ENCODE measurements at regions of chr17 and their contacts with region 1.

Region 1: DNA sequence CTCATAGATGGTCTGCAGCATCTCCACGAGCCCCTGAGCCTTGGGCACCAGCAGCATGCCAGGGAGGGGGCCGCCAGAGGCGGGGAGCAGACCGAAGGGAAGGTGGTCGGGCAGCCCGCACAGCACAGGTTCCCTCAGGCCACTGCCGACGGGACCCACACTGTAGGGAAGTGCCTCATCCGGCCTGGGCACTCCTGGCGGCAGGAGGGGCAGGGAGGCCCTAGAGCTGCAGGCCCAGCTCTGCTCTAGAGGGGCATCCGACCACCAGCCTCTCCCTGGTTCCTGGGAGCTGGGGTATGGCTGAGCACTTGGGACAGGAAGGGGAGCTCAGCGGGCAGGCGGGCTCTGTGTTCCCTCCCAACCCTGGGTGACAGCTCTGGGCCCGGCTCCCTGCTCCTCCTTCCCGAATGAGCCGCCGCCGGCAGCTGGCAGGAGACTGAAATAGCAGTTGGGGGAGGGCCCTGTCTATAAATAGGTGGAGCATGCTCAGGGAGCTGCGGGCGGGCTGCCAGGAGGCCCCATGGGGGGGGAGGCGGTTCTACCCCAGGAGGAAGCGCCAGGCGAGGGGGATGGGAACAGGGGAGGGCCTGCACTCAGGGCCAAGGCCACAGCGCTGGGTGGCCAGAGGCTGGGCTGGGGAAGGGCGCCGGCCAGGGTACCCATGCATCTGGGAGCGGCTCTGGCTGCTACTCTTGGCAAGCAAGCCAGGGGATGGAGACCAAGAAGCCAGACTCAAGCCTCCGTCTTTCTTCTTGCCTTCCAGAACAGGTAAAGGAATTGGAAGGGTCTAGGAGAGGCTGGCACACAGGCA is 12.4 kb downstream of the HDAC5 start:
- DNase-seq: no peak
- H3K4me3 ChIP-seq: peak overlapping the region; percentile 57
- H3K27ac ChIP-seq: peak overlapping the region; percentile 47
- H3K27me3 ChIP-seq: no peaks in the 10 kb centered on the region
- CTCF ChIP-seq: no peak; the same call in 1 of the 2 replicates

Region 2: GRCh38 chr17:43006639-43007551 is 1104.1 kb before region 1 on chr17 and contains the start of gene IFI35:
- CTCF ChIA-PET with region 1: no interaction called
- POLR2A ChIA-PET with region 1: no interaction called
- DNase-seq: peak; percentile 52
- H3K4me3 ChIP-seq: peak within 1 kb of the TSS; percentile 89
- H3K27ac ChIP-seq: peak within 1 kb of the TSS; percentile 94
- H3K27me3 ChIP-seq: no peaks in the 10 kb centered on the region
- CTCF ChIP-seq: peak; percentile 31
- polyA plus RNA-seq, gene IFI35: 24.1 and 25.7 TPM in 2 replicates

Region 3: DNA sequence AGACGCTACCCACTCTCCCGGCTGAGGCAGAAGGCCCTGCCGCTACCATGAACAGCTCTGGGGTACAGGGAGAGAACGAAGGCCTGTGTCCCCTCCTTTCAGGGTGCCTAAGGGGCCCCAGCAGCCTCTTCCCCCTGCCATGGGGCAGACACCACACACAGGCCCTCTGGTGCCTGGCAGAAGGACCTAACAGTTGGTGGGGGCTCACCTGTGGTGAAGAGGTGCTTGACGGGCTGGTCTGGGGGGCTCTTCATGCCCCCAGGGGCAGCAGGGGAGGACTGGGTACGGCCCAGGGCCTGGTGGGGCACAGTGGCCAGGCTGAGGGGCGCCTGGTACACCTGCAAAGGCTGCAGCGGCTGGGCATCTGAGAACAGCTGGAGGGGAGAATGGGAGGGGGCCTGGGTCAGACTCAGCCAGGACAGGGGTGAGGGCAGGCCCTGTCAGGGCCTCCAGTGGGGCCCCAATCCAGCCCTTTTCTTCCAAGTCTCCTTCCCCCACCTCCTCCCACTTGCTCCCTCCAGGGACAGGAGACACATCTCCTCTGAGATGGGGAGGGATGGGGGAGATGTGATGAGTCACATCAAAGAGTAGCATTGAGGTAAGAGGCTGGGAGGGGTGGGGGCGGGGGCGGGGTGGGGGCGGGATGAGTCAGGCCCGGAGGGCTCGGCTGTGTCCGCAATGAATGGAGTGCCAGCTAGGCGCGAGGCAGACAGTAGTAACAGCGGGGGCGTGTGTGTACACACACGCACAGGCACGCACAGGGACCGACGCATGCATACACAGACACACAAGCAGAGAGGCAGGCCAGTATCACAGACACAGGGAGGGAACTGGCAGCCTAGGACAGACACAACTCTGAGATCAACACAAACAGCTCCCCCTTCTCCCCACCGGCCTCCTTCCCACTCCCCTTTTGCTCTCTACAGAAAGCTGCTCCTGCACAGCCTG is 24.4 kb before region 1 on chr17:
- CTCF ChIA-PET with region 1: interaction called, 10 read pairs
- POLR2A ChIA-PET with region 1: interaction called, 14 read pairs
- DNase-seq: peak; percentile 75
- H3K4me3 ChIP-seq: no peak overlapping the region; the same call in 1 of the 2 replicates
- H3K27ac ChIP-seq: peak overlapping the region; percentile 81
- H3K27me3 ChIP-seq: no peaks in the 10 kb centered on the region
- CTCF ChIP-seq: no peak

Region 4: GRCh38 chr17:44095642-44096496 is 15.2 kb before region 1 on chr17:
- CTCF ChIA-PET with region 1: interaction called, 14 read pairs
- POLR2A ChIA-PET with region 1: interaction called, 12 read pairs
- DNase-seq: peak; percentile 79
- H3K4me3 ChIP-seq: peak overlapping the region; percentile 54
- H3K27ac ChIP-seq: peak overlapping the region; percentile 96
- H3K27me3 ChIP-seq: no peaks in the 10 kb centered on the region
- CTCF ChIP-seq: peak; percentile 45